ENCODE measurements at regions of chr11 and their contacts with region 1.

Region 1: GRCh38 chr11:92886243-92886905 is 83.1 kb upstream of the MTNR1B start:
- DNase-seq: peak; percentile 32
- ATAC-seq: peak; percentile 95
- H3K4me3 Mint-ChIP-seq: no peak overlapping the region
- H3K27ac Mint-ChIP-seq: no peak overlapping the region
- H3K4me1 Mint-ChIP-seq: no peaks in the 10 kb centered on the region
- H3K27me3 Mint-ChIP-seq: no peaks in the 10 kb centered on the region
- CTCF ChIP-seq: peak; percentile 52

Region 2: DNA sequence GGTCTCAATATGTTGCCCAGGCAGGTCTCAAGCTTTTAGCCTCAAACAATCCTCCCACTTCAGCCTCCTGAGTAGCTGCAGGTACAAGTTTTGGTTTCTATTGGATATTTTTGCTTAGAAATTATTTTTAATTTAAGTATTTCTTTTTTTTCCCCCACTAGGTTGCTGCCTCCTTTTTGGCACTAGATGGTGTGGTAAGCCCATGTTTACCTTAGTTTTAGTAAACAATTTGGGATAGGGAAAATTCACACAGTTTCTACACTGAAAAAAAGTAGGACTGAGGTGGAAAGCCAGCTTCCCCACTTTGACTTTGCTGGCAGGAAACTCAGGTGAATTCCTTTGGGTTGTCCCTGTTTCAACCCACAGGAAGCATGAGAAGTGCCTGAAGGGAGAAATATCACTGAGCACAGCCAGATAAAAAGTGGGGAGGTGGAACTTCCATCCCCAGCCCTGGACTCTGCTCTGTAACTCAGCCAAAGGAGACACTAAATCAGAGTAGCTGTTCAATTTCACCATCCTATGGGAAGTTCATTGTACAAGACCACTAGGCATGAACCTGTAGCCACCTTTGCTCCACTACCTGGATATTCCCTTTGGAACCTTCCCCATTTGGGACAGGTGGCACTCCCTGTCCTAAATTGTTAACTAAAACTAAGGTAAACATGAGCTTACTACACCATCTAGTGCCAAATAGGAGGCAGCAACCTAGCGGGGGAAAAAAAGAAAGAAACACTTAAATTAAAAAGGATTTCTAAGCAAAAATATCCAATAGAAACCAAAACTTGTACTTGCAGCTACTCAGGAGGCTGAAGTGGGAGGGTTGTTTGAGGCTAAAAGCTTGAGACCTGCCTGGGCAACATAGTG is 816.1 kb before region 1 on chr11:
- CTCF ChIA-PET with region 1: interaction called, 13 read pairs
- POLR2A ChIA-PET with region 1: no interaction called
- DNase-seq: no peak
- ATAC-seq: peak; percentile 81
- H3K4me3 Mint-ChIP-seq: no peak overlapping the region
- H3K27ac Mint-ChIP-seq: no peak overlapping the region
- H3K4me1 Mint-ChIP-seq: no peaks in the 10 kb centered on the region
- H3K27me3 Mint-ChIP-seq: peaks cover 6% of the 10 kb centered on the region
- CTCF ChIP-seq: no peak

Region 3: GRCh38 chr11:92136797-92137196 is 749.6 kb before region 1 on chr11:
- CTCF ChIA-PET with region 1: interaction called, 15 read pairs
- POLR2A ChIA-PET with region 1: no interaction called
- DNase-seq: peak; percentile 20
- ATAC-seq: peak; percentile 94
- H3K4me3 Mint-ChIP-seq: no peak overlapping the region
- H3K27ac Mint-ChIP-seq: no peak overlapping the region
- H3K4me1 Mint-ChIP-seq: no peaks in the 10 kb centered on the region
- H3K27me3 Mint-ChIP-seq: no peaks in the 10 kb centered on the region
- CTCF ChIP-seq: no peak

Region 4: GRCh38 chr11:92830377-92831155 is 55.8 kb before region 1 on chr11:
- CTCF ChIA-PET with region 1: no interaction called
- POLR2A ChIA-PET with region 1: no interaction called
- DNase-seq: no peak
- ATAC-seq: no peak
- H3K4me3 Mint-ChIP-seq: no peak overlapping the region
- H3K27ac Mint-ChIP-seq: no peak overlapping the region
- H3K4me1 Mint-ChIP-seq: peaks cover 37% of the 10 kb centered on the region
- H3K27me3 Mint-ChIP-seq: no peaks in the 10 kb centered on the region
- CTCF ChIP-seq: no peak

Region 5: DNA sequence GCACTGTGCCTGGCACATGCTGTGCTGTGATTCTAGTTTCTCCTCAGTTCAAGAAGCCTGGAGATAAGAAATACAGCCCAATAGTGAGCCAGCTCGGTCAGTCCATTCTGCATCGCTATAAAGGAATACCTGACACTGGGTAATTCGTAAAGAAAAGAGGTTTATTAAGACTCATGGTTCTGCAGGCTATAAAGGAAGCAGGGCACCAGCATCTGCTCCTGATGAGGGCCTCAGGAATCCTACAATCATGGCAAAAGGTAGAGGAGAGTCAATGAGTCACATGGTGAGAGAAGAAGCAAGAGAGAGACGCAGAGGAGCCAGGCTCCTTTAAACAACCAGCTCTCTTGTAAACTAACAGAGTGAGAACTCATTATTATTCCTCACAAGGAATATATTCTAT is 18.0 kb after region 1 on chr11:
- CTCF ChIA-PET with region 1: no interaction called
- POLR2A ChIA-PET with region 1: no interaction called
- DNase-seq: no peak
- ATAC-seq: no peak
- H3K4me3 Mint-ChIP-seq: no peak overlapping the region
- H3K27ac Mint-ChIP-seq: no peak overlapping the region
- H3K4me1 Mint-ChIP-seq: peaks cover 9% of the 10 kb centered on the region
- H3K27me3 Mint-ChIP-seq: no peaks in the 10 kb centered on the region
- CTCF ChIP-seq: no peak